PC-9 (cell line): ENCODE measurements at regions of chr19 and their contacts with region 1.

Region 1: DNA sequence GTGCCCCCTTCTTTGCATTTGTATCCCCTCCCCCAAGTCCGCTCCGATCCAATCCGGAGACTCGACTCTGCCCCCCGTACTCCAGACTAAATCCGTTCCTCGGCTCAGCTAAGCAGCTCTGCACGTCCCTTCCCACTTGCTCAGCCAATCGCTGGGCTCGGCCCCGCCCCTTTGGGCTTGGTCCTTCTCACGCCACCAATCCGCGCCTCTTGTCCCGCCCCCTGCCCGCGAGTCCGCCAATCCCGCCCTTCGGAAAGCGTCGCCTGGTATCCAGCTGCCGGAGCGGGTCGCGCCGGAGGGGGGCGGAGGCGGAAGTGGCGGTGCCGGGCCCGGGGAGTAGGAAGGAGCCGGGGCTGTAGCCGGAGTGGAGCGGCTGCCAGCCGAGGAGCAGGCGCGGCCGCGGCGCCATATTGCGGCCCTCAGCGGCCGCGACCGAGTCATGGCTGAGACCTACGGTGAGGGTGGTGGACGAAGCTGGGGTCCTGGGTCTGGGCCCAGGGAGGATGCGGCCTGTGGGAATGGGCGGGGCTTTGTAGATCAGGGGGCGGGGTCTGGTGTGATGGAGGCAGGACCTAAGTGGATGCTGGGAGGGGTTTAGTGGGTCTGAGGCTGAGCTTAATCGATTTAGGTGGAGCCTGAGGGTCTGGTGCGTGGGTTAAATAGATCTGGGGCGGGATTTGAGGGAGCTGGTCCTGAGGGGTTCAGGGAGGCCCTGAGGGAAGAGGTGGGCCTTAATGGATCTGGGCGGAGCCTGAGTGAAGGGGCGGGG is at the start of gene RAB4B:
- DNase-seq: peak; percentile 97 to 100
- H3K4me3 ChIP-seq: peak within 1 kb of the TSS; percentile 64
- H3K27ac ChIP-seq: peak within 1 kb of the TSS; percentile 95
- H3K4me1 ChIP-seq: peaks cover 13% of the 10 kb centered on the region
- H3K27me3 ChIP-seq: no peaks in the 10 kb centered on the region
- CTCF ChIP-seq: no peak
- total RNA-seq, gene RAB4B: 22.2 and 24.8 TPM in 2 replicates

Region 2: DNA sequence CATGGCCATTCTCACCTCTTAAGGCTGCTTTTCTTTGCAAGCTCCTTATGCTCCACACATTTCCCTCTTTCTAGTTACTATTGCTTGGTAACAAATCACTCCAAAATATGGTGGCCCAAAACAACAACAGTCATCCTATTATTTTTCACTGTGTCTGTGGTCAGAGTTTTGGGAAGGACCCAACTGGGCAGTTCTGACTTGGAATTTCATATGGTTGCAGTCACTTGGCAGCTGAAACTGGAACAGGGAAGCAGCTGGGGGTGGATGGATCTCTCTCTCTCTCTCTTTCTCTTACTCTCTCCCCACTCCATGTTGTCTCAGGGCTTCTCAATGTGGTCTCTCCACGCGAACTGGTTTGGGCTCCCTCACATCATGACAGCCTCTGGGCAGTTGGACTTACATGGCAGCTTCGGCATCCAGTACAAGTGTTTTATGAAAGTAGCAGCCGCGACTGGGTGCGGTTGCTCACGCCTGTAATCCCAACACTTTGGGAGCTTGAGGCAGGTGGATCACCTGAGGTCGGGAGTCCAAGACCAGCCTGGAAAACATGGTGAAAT is 127.3 kb before region 1 on chr19:
- CTCF ChIA-PET with region 1: no interaction called
- POLR2A ChIA-PET with region 1: interaction called, 33 read pairs
- intact Hi-C with region 1: no loop called
- DNase-seq: no peak
- H3K4me3 ChIP-seq: no peak overlapping the region
- H3K27ac ChIP-seq: no peak overlapping the region
- H3K4me1 ChIP-seq: peaks cover 10% of the 10 kb centered on the region
- H3K27me3 ChIP-seq: no peaks in the 10 kb centered on the region
- CTCF ChIP-seq: no peak

Region 3: DNA sequence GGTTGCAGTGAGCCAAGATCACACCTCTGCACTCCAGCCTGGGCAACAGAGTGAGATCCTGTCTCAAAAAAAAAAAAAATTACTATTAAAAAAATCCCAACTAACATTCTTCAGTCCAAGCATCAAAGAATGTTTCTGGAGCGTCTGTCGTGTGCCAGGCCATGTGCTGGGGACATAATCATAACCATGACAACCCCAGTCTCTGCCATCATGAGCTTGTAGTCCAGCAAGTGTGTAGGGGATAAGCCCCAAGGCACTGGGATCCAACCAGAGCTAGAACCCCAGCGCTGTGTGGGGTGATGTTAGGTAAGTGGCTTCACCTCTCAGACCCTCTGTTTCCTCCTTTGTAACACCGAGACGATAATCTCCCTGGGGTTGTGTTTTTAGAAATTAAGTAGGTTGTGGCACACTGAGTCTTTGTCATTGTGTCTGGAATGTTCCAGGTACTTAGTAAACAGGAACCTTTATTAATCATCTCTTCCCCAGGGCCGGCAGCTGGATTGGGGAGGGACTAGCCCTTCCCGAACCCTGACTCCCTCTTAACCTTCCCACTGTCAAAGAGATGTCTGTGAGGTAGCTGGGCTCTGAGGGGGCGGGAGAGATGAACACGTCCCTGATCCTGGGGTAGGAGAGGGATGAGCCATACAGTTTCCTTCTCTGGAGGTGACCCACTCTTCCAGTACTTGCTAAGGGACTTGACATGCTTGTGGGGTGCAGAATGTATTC is 56.0 kb before region 1 on chr19:
- CTCF ChIA-PET with region 1: no interaction called
- POLR2A ChIA-PET with region 1: interaction called, 35 read pairs
- intact Hi-C with region 1: no loop called
- DNase-seq: no peak
- H3K4me3 ChIP-seq: no peak overlapping the region
- H3K27ac ChIP-seq: no peak overlapping the region
- H3K4me1 ChIP-seq: peaks cover 27% of the 10 kb centered on the region
- H3K27me3 ChIP-seq: no peaks in the 10 kb centered on the region
- CTCF ChIP-seq: no peak

Region 4: GRCh38 chr19:40806488-40807468 is 28.7 kb after region 1 on chr19:
- CTCF ChIA-PET with region 1: interaction called, 19 read pairs
- POLR2A ChIA-PET with region 1: interaction called, 5 read pairs
- intact Hi-C with region 1: no loop called
- DNase-seq: no peak
- H3K4me3 ChIP-seq: no peak overlapping the region
- H3K27ac ChIP-seq: no peak overlapping the region
- H3K4me1 ChIP-seq: peaks cover 20% of the 10 kb centered on the region; the same call in 1 of the 2 replicates
- H3K27me3 ChIP-seq: no peaks in the 10 kb centered on the region
- CTCF ChIP-seq: no peak

Region 5: DNA sequence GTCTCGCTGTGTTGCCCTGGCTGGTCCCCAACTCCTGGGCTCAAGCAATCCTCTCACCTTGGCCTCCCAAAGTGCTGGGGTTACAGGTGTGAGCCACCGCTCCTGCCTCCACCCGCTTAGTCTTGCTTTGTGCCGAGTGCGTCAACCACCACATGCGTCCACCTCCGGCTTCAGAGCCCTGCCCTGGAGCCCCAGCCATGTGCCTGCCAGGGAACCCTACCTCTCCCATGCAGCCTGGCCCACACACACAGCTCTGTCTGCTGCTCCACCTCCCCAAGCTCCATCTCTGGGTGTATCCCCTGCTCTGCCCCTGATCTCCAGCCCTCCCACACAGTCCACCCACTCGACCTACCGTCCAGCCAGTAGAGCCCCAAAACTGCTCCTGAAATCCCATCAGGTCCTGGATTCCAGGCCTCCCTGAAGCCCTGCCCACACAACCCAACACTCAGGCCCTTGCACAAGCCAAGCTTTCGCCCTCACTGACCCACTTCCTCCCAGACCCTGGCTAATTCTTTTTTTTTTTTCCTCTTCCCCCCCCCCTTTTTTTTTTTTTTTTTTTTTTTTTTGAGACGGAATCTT is 345.7 kb after region 1 on chr19:
- CTCF ChIA-PET with region 1: no interaction called
- POLR2A ChIA-PET with region 1: interaction called, 14 read pairs
- intact Hi-C with region 1: no loop called
- DNase-seq: no peak
- H3K4me3 ChIP-seq: no peak overlapping the region
- H3K27ac ChIP-seq: no peak overlapping the region
- H3K4me1 ChIP-seq: no peaks in the 10 kb centered on the region; the same call in 1 of the 2 replicates
- H3K27me3 ChIP-seq: no peaks in the 10 kb centered on the region
- CTCF ChIP-seq: no peak